HepG2 (cell line): ENCODE measurements at regions of chr1 and their contacts with region 1.

Region 1: GRCh38 chr1:45884700-45885099 is 81.3 kb downstream of the MAST2 start:
- DNase-seq: peak; percentile 62
- ATAC-seq: peak; percentile 73
- H3K4me3 ChIP-seq: no peak overlapping the region
- H3K27ac ChIP-seq: peak overlapping the region; percentile 52
- H3K4me1 ChIP-seq: peaks cover 37% of the 10 kb centered on the region
- H3K27me3 ChIP-seq: no peaks in the 10 kb centered on the region
- CTCF ChIP-seq: no peak; the same call in 1 of the 2 replicates
- EP300 ChIP-seq: peak in 1 of 2 experiments; percentile 52; a peak in 1 of 4 replicates
- POLR2A ChIP-seq: no peak
- RAD21 ChIP-seq: no peak

Region 2: DNA sequence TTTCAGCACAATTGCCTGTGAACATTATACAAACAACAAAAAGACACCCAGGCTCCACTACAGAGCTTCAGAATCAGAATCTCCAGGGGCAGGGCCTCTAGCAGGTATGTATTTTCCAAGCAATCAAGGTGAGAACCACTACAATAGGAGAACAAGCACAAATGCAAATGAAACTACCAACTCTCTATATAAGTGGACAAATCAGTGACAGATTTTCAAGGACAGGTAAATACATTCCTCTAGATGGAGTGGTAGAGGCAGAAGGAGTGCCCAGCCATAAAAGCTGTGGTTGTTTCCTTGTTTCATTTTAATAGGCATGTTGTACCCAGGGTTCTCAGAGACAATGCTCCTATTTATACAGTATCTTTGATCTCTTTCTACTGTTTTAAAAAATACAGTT is 240.7 kb before region 1 on chr1:
- CTCF ChIA-PET with region 1: no interaction called
- POLR2A ChIA-PET with region 1: no interaction called
- in situ Hi-C with region 1: no loop called
- intact Hi-C with region 1: loop called (anchors 2 kb)
- DNase-seq: peak; percentile 63
- ATAC-seq: peak; percentile 83
- H3K4me3 ChIP-seq: no peak overlapping the region
- H3K27ac ChIP-seq: peak overlapping the region; percentile 21
- H3K4me1 ChIP-seq: peaks cover 34% of the 10 kb centered on the region
- H3K27me3 ChIP-seq: no peaks in the 10 kb centered on the region
- CTCF ChIP-seq: peak; percentile 44
- EP300 ChIP-seq: no peak
- POLR2A ChIP-seq: no peak
- RAD21 ChIP-seq: peak; percentile 26; the same call in 1 of the 2 replicates

Region 3: GRCh38 chr1:45750298-45751038 is 134.2 kb before region 1 on chr1 and contains the start of gene IPP:
- CTCF ChIA-PET with region 1: no interaction called
- POLR2A ChIA-PET with region 1: no interaction called
- in situ Hi-C with region 1: no loop called
- intact Hi-C with region 1: loop called (anchors 1 kb)
- DNase-seq: peak; percentile 95
- ATAC-seq: peak; percentile 93
- H3K4me3 ChIP-seq: peak within 1 kb of the TSS; percentile 72 to 86 (median 79)
- H3K27ac ChIP-seq: peak within 1 kb of the TSS; percentile 97
- H3K4me1 ChIP-seq: peaks cover 51% of the 10 kb centered on the region
- H3K27me3 ChIP-seq: no peaks in the 10 kb centered on the region
- CTCF ChIP-seq: peak; percentile 81
- EP300 ChIP-seq: peak in 1 of 2 experiments; percentile 27; a peak in 2 of 4 replicates
- POLR2A ChIP-seq: peak; percentile 94 to 95
- RAD21 ChIP-seq: peak; percentile 79
- total RNA-seq, gene IPP: 9.7 and 14.1 TPM in 2 replicates

Region 4: GRCh38 chr1:45803301-45803780 is 81.4 kb before region 1 on chr1 and contains the start of gene MAST2:
- CTCF ChIA-PET with region 1: no interaction called
- POLR2A ChIA-PET with region 1: interaction called, 3 read pairs
- in situ Hi-C with region 1: no loop called
- intact Hi-C with region 1: loop called (anchors 2 kb)
- DNase-seq: peak; percentile 67
- ATAC-seq: peak; percentile 89
- H3K4me3 ChIP-seq: peak within 1 kb of the TSS; percentile 81 to 97 (median 90)
- H3K27ac ChIP-seq: peak within 1 kb of the TSS; percentile 53
- H3K4me1 ChIP-seq: peaks cover 32% of the 10 kb centered on the region
- H3K27me3 ChIP-seq: no peaks in the 10 kb centered on the region
- CTCF ChIP-seq: no peak
- EP300 ChIP-seq: no peak
- POLR2A ChIP-seq: peak; percentile 46 to 80
- RAD21 ChIP-seq: 0 out of 2 replicates have a peak, but pooled peaks have one; percentile 40
- total RNA-seq, gene MAST2: 14.3 and 15.3 TPM in 2 replicates

Region 5: GRCh38 chr1:45854724-45855123 is 30.0 kb before region 1 on chr1:
- CTCF ChIA-PET with region 1: interaction called, 11 read pairs
- POLR2A ChIA-PET with region 1: no interaction called
- in situ Hi-C with region 1: no loop called
- intact Hi-C with region 1: no loop called
- DNase-seq: peak; percentile 23
- ATAC-seq: peak; percentile 79
- H3K4me3 ChIP-seq: no peak overlapping the region
- H3K27ac ChIP-seq: peak overlapping the region; percentile 14
- H3K4me1 ChIP-seq: peaks cover 36% of the 10 kb centered on the region
- H3K27me3 ChIP-seq: no peaks in the 10 kb centered on the region
- CTCF ChIP-seq: peak; percentile 29; the same call in 1 of the 2 replicates
- EP300 ChIP-seq: no peak
- POLR2A ChIP-seq: no peak
- RAD21 ChIP-seq: 0 out of 2 replicates have a peak, but pooled peaks have one; percentile 26

Region 6: GRCh38 chr1:46224966-46225365 is 340.3 kb after region 1 on chr1:
- CTCF ChIA-PET with region 1: no interaction called
- POLR2A ChIA-PET with region 1: no interaction called
- in situ Hi-C with region 1: no loop called
- intact Hi-C with region 1: no loop called
- DNase-seq: no peak
- ATAC-seq: no peak
- H3K4me3 ChIP-seq: no peak overlapping the region
- H3K27ac ChIP-seq: no peak overlapping the region
- H3K4me1 ChIP-seq: peaks cover 37% of the 10 kb centered on the region
- H3K27me3 ChIP-seq: no peaks in the 10 kb centered on the region
- CTCF ChIP-seq: no peak
- EP300 ChIP-seq: no peak
- POLR2A ChIP-seq: no peak
- RAD21 ChIP-seq: no peak